ENCODE measurements at regions of chr6 and their contacts with region 1.

Region 1: DNA sequence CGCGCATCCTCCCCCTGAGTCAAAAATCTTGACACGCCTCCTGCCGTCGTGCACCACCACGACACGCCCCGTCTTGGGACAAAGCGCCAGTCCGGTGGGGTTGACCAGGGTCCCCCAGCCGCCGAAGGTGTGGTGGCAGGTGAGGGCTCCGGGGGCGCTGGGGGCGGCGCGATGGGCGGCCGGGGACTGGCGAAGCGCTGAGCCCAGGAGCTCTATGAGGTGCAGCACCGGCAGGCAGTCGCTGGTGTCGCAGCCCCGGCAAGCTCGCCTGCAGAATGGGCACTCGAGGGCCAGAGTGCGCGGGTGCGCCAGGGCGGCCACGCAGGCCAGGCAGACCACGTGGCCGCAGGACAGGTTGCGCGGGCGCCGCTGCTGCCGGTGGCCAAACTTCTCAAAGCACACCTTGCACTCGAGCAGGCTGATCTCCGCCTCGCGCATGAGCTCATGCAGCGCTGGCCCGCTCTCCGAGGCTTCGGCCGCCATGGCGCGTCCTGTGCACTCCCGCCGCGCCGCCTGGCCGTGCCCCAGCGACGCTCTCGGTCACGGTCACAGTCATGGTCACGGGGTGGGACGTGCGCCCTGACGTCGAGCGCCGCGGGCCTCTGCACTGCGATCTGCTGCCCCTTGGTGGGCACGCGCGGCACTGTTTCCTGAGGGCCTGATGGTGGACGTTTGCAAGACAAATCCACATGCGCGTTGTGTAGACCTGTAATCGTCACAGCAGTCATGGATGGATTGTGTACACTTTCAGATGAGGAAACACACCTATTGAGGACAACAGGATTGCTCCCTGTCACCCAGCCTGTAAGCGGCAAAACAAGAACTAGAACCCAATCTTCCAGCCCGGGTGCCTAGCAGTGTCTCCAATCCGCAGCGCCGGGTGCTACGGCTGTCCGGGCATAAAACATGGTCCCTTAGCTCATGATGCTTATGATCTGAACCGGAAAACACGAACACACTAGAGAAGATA is at the start of gene NHLRC1:
- DNase-seq: peak; percentile 35
- H3K4me3 ChIP-seq: peak within 1 kb of the TSS; percentile 38 to 69 (median 50)
- H3K27ac ChIP-seq: peak within 1 kb of the TSS; percentile 56 to 70 (median 61)
- H3K4me1 ChIP-seq: peaks cover 7 to 24% (median 14%) of the 10 kb centered on the region in 3 donors
- H3K27me3 ChIP-seq: no peaks in the 10 kb centered on the region
- CTCF ChIP-seq: peak; percentile 81 to 99 (median 94)
- POLR2A ChIP-seq: peak in 2 of 4 donors; percentile 7 to 45
- total RNA-seq, gene NHLRC1: 0.49 to 1.8 (median 1.3) TPM

Region 2: DNA sequence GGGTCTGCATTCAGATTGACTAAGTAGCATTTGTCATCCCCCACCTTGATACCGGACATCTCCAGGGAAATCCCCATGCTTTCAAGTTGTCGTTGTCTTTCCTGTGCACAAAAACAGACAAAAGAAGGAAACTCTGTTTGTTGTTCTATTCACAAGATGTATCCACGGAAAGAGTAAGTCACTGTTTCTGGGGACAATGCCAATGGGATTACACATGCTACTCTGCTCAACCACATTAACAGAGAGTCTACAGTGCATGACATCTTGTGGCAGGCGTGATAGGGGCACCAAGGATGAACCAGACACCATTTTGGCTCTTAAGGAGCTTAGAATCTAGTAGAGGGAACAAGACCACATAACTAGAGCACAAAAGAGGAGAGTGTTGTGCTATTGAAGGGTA is 291.3 kb before region 1 on chr6:
- intact Hi-C with region 1: loop called (anchors 10 kb)
- DNase-seq: no peak
- H3K4me3 ChIP-seq: no peak overlapping the region
- H3K27ac ChIP-seq: no peak overlapping the region
- H3K4me1 ChIP-seq: peaks cover 0 to 6% (median 0%) of the 10 kb centered on the region in 3 donors
- H3K27me3 ChIP-seq: no peaks in the 10 kb centered on the region
- CTCF ChIP-seq: no peak
- POLR2A ChIP-seq: no peak

Region 3: DNA sequence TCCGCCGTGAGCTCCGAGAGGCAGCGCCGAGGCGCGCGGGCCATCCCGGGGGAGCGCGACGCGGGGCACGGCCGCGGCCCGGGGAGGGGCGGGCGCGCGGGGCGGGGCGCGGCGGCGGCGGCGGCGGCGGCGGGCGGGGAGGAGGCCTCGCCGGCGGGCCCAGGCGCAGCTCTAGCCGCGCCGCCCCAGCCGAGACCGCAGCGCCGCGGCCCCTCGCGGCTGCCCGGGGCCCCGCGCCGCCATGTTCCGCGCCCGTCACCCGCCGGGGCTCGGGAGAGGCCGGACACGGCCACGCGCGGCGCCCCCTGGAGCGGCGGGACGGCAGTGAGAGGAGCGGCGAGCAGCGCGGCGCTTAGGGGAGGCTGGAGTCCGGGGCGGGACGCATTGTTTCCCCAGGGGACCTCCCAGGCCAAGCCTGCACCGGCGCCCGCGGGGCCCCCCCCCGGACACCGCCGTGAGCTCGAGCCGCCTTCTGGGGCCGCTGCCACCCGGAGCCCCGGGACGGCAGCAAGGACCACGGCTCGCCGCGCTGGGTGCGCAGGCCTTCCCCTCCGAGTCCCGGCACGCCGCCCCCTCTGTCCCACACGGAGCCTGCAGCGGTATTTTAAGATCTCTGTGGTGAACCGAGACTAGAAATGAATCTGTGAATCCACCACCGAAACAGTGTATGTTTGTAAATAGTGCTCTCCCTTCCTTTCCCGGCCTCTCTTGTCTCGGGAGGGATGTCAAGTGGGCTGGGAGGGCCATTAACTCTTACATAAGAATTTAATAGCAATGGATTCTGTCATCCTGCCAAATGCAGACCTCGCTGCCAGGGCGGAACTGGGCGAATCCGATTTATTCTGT is 134.6 kb before region 1 on chr6 and contains the start of gene KIF13A:
- intact Hi-C with region 1: loop called (anchors 10 kb)
- DNase-seq: peak; percentile 8
- H3K4me3 ChIP-seq: peak within 1 kb of the TSS; percentile 75 to 91 (median 84)
- H3K27ac ChIP-seq: peak within 1 kb of the TSS; percentile 94 to 99 (median 96)
- H3K4me1 ChIP-seq: peaks cover 20 to 63% (median 28%) of the 10 kb centered on the region in 3 donors
- H3K27me3 ChIP-seq: peaks cover 0 to 8% (median 0%) of the 10 kb centered on the region in 4 donors
- CTCF ChIP-seq: peak in 4 of 6 experiments; percentile 3 to 37 (median 22)
- POLR2A ChIP-seq: peak in 2 of 4 donors; percentile 30 to 38
- total RNA-seq, gene KIF13A: 18.7 to 34.5 (median 25.0) TPM